ENCODE measurements at regions of chr3 and their contacts with region 1.

Region 1: GRCh38 chr3:9302425-9303181 is 53.2 kb upstream of the SRGAP3 start:
- DNase-seq: peak; percentile 83
- ATAC-seq: peak; percentile 94
- H3K4me3 ChIP-seq: peak overlapping the region in 1 of 5 experiments; percentile 12
- H3K4me3 Mint-ChIP-seq: peak overlapping the region; percentile 40
- H3K27ac ChIP-seq: no peak overlapping the region
- H3K27ac Mint-ChIP-seq: no peak overlapping the region
- H3K4me1 ChIP-seq: peaks cover 5 to 7% of the 10 kb centered on the region in 2 donors
- H3K4me1 Mint-ChIP-seq: peaks cover 7% of the 10 kb centered on the region
- H3K27me3 ChIP-seq: peaks cover 0 to 10% (median 5%) of the 10 kb centered on the region in 4 experiments
- H3K27me3 Mint-ChIP-seq: peaks cover 22% of the 10 kb centered on the region
- CTCF ChIP-seq: peak; percentile 83

Region 2: DNA sequence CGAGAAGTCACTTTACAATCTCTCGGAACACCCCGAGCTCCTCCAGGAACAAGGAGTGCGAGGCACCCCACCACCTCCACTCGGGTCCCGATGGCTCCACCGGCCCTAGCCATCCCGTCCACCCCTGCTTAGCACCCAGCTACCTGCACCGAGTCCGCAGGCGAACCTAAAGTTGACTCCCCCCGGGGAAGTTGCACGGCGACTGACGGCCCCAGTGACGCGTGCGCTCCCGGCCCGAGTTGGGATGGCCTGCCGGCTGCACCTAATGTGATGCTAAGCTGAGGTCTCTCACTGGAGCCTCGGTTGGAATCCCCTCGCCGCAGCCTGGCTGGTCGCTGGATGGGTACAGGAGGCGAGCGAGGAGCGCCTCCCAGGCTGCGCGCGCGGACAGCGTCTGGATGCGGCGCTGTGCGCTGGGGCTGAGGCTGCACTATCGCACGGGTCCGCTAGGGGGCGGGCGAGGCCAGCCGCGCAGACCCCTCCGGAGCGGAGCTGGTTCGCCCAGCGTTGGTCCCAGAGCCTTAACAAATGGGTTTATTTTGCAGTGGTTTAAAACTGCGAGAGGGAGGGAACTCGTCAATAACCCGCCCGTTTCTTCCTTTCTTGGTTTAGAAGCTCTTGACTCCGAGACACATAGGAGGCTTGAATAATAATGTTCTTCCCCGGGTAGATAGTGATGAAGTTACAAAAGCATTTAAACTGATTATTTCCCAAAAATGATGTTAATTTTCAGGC is 533.3 kb before region 1 on chr3 and contains the start of gene OXTR:
- CTCF ChIA-PET with region 1: interaction called, 4 read pairs
- POLR2A ChIA-PET with region 1: no interaction called
- intact Hi-C with region 1: loop called (anchors 10 kb)
- DNase-seq: peak; percentile 62
- ATAC-seq: peak; percentile 88
- H3K4me3 ChIP-seq: peak within 1 kb of the TSS in 3 of 5 experiments; percentile 21 to 52 (median 35)
- H3K4me3 Mint-ChIP-seq: peak within 1 kb of the TSS; percentile 72
- H3K27ac ChIP-seq: no peak within 1 kb of the TSS
- H3K27ac Mint-ChIP-seq: no peak within 1 kb of the TSS
- H3K4me1 ChIP-seq: peaks cover 17 to 22% of the 10 kb centered on the region in 2 donors
- H3K4me1 Mint-ChIP-seq: peaks cover 19% of the 10 kb centered on the region
- H3K27me3 ChIP-seq: peaks cover 0 to 32% (median 12%) of the 10 kb centered on the region in 4 experiments
- H3K27me3 Mint-ChIP-seq: peaks cover 30% of the 10 kb centered on the region
- CTCF ChIP-seq: peak; percentile 99
- total RNA-seq, gene OXTR: 0.10 and 0.17 TPM in 2 replicates

Region 3: DNA sequence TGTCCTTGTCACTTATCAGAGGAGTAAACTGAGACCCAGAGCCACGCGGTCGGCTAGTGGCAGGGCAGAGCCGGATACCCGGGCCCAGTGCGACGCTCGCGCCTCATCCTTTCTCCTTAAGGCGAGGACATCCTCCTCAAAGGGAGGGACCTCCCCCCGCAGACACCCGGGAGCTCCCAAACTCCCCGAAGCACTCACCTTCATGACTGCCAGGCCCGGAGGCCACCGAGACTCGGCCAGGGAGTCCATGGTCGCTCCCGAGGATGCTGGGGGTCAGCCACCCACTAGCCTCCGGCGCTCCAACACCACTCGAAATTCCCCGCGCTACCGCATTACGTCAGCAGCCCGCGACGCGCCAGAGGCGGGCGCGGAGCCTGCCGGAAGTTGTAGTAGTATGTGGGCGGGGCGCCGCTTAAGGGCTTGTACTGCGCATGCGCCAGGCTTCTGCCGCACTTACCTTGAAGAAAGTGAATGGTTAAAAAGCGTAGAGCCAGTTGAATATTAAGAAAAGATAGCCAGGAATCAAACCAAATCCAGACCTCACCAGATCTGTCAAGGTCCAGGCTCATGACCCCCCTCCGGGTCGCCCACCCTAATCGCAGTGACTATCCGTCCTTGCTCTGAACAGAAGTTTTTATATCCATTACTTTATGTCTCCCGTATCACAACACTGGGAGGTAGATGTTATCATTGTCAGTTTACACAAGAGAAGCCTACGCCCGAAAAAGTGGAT is 339.3 kb before region 1 on chr3 and contains the start of gene RAD18:
- CTCF ChIA-PET with region 1: interaction called, 156 read pairs
- POLR2A ChIA-PET with region 1: no interaction called
- intact Hi-C with region 1: no loop called
- DNase-seq: peak; percentile 95
- ATAC-seq: peak; percentile 97
- H3K4me3 ChIP-seq: peak within 1 kb of the TSS; percentile 79 to 93 (median 85)
- H3K4me3 Mint-ChIP-seq: peak within 1 kb of the TSS; percentile 89
- H3K27ac ChIP-seq: peak within 1 kb of the TSS; percentile 81 to 93
- H3K27ac Mint-ChIP-seq: peak within 1 kb of the TSS; percentile 94
- H3K4me1 ChIP-seq: peaks cover 18 to 25% of the 10 kb centered on the region in 2 donors
- H3K4me1 Mint-ChIP-seq: peaks cover 34% of the 10 kb centered on the region
- H3K27me3 ChIP-seq: peaks cover 0 to 3% (median 0%) of the 10 kb centered on the region in 4 experiments
- H3K27me3 Mint-ChIP-seq: peaks cover 7% of the 10 kb centered on the region
- CTCF ChIP-seq: no peak
- total RNA-seq, gene RAD18: 20.6 and 21.3 TPM in 2 replicates

Region 4: GRCh38 chr3:8970971-8971589 is 331.5 kb before region 1 on chr3:
- CTCF ChIA-PET with region 1: interaction called, 156 read pairs
- POLR2A ChIA-PET with region 1: no interaction called
- intact Hi-C with region 1: no loop called
- DNase-seq: peak; percentile 81
- ATAC-seq: peak; percentile 85
- H3K4me3 ChIP-seq: no peak overlapping the region
- H3K4me3 Mint-ChIP-seq: no peak overlapping the region
- H3K27ac ChIP-seq: no peak overlapping the region
- H3K27ac Mint-ChIP-seq: no peak overlapping the region
- H3K4me1 ChIP-seq: peaks cover 0 to 4% of the 10 kb centered on the region in 2 donors
- H3K4me1 Mint-ChIP-seq: peaks cover 4% of the 10 kb centered on the region
- H3K27me3 ChIP-seq: peaks cover 0 to 14% (median 4%) of the 10 kb centered on the region in 4 experiments
- H3K27me3 Mint-ChIP-seq: peaks cover 19% of the 10 kb centered on the region
- CTCF ChIP-seq: peak; percentile 99

Region 5: GRCh38 chr3:8987645-8988383 is 314.8 kb before region 1 on chr3:
- CTCF ChIA-PET with region 1: interaction called, 12 read pairs
- POLR2A ChIA-PET with region 1: no interaction called
- intact Hi-C with region 1: loop called (anchors 5 kb)
- DNase-seq: peak; percentile 55
- ATAC-seq: peak; percentile 57
- H3K4me3 ChIP-seq: no peak overlapping the region
- H3K4me3 Mint-ChIP-seq: peak overlapping the region; percentile 52
- H3K27ac ChIP-seq: no peak overlapping the region
- H3K27ac Mint-ChIP-seq: no peak overlapping the region
- H3K4me1 ChIP-seq: peaks cover 0 to 6% of the 10 kb centered on the region in 2 donors
- H3K4me1 Mint-ChIP-seq: peaks cover 6% of the 10 kb centered on the region
- H3K27me3 ChIP-seq: peaks cover 0 to 2% (median 0%) of the 10 kb centered on the region in 4 experiments
- H3K27me3 Mint-ChIP-seq: peaks cover 6% of the 10 kb centered on the region
- CTCF ChIP-seq: peak; percentile 79

Region 6: DNA sequence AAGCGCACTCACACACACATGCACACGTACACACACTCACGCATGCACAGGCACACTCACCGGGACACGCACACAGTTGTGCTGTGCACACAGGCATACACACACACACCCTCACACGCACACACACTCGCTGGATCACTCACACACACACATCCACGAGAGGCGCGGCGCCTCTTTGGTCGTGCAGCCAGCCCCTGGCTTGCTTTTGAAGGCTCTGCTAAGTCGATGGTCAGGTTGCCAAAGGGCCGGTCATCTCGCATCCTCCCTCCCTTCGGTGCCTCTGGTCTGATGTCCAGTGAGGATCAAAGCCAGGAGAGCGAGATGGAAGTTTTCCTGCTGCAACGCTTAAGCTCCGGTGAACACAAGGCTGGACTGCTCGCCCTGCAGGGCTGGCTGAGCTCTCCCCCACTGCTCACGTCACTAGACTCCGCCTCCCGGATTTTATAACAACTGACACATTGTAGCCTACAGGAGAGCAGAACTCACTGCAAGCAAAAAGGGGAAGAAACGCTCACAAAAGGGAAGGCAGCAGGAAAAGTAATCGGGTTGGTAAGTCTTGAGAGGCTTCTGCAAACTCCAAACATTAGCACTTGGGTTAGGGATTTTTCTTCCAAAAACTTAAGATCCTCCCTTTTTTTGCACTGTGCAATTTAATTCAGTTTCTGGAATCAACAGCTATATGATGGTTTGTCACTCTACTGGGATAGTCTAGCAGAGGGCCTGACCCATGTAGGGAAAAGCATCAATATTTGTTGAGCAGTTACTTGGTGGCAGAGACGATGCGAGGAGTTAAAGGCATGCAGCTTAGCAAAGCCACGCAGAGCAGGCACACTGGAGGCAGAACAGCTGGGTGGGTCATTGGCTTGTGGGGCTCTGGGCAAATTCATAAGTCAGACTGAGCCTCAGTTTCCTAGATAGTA is 53.1 kb before region 1 on chr3 and contains the start of gene SRGAP3:
- CTCF ChIA-PET with region 1: no interaction called
- POLR2A ChIA-PET with region 1: no interaction called
- intact Hi-C with region 1: loop called (anchors 2 kb)
- DNase-seq: peak; percentile 85
- ATAC-seq: peak; percentile 100
- H3K4me3 ChIP-seq: peak within 1 kb of the TSS; percentile 61 to 88 (median 69)
- H3K4me3 Mint-ChIP-seq: peak within 1 kb of the TSS; percentile 86
- H3K27ac ChIP-seq: no peak within 1 kb of the TSS
- H3K27ac Mint-ChIP-seq: peak within 1 kb of the TSS; percentile 8
- H3K4me1 ChIP-seq: peaks cover 14 to 22% of the 10 kb centered on the region in 2 donors
- H3K4me1 Mint-ChIP-seq: peaks cover 20% of the 10 kb centered on the region
- H3K27me3 ChIP-seq: peaks cover 0 to 6% (median 0%) of the 10 kb centered on the region in 4 experiments
- H3K27me3 Mint-ChIP-seq: peaks cover 19% of the 10 kb centered on the region
- CTCF ChIP-seq: no peak
- total RNA-seq, gene SRGAP3: 1.5 and 3.4 TPM in 2 replicates

Measured in B cell (primary cell).